ENCODE measurements at regions of chr5 and their contacts with region 1.

Region 1: DNA sequence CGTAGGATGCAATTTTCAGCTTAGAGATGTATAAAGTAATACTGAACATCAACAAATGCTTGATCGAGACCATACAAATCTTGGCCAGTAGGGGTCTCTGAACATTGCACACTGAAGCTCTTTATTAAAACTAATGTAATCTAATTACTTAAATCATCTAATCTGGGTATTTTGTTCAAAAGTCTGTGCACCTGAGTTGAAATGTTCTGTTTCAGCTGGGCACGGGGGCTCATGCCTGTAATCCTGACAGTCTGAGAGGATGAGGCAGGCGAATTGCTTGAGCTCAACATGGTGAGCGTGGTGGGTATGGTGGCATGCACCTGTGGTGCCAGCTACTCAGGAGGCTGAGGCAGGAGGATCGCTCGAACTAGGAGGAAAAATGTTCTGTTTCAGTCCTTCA is 41.0 kb downstream of the ESM1 start:
- DNase-seq: peak; percentile 59
- ATAC-seq: peak; percentile 67
- H3K4me3 Mint-ChIP-seq: no peak overlapping the region
- H3K27ac Mint-ChIP-seq: no peak overlapping the region
- H3K4me1 Mint-ChIP-seq: no peaks in the 10 kb centered on the region
- H3K27me3 Mint-ChIP-seq: peaks cover 1% of the 10 kb centered on the region
- CTCF ChIP-seq: peak; percentile 86

Region 2: DNA sequence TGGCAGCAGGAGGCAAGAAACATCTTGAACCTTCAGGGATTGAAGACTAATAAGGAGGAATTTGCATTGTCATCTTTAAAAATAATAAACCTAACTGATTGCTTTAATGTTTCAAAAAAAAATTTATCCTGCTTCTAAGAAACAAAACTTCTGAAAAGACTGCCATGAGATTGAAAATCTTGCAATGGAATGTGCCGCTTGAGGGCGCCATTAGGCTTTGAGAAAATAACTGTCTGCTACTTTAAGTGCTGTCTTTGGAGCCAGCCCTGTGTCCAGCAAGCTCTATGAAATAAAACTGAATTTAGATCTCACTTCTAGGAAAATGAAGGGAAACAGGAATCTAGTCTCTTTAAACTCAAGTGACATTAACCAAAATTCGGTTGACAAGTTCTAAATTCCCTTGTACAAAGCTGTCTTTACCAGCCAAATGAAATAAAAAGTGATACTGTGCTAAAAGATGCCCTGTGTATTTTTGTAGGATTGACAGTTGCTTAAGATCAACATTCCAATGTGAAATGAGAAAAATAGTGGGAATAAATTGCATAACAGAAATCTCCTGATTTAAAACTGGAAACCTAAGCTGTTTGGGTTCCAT is 38.3 kb before region 1 on chr5:
- CTCF ChIA-PET with region 1: interaction called, 67 read pairs
- POLR2A ChIA-PET with region 1: no interaction called
- intact Hi-C with region 1: no loop called
- DNase-seq: peak; percentile 90
- ATAC-seq: no peak
- H3K4me3 Mint-ChIP-seq: no peak overlapping the region
- H3K27ac Mint-ChIP-seq: no peak overlapping the region
- H3K4me1 Mint-ChIP-seq: peaks cover 17% of the 10 kb centered on the region
- H3K27me3 Mint-ChIP-seq: peaks cover 36% of the 10 kb centered on the region
- CTCF ChIP-seq: peak; percentile 88

Region 3: GRCh38 chr5:54969856-54970828 is 25.8 kb after region 1 on chr5:
- CTCF ChIA-PET with region 1: interaction called, 40 read pairs
- POLR2A ChIA-PET with region 1: interaction called, 4 read pairs
- intact Hi-C with region 1: no loop called
- DNase-seq: no peak
- ATAC-seq: no peak
- H3K4me3 Mint-ChIP-seq: no peak overlapping the region
- H3K27ac Mint-ChIP-seq: no peak overlapping the region
- H3K4me1 Mint-ChIP-seq: no peaks in the 10 kb centered on the region
- H3K27me3 Mint-ChIP-seq: no peaks in the 10 kb centered on the region
- CTCF ChIP-seq: no peak

Region 4: GRCh38 chr5:55037046-55037771 is 92.8 kb after region 1 on chr5:
- CTCF ChIA-PET with region 1: interaction called, 14 read pairs
- POLR2A ChIA-PET with region 1: no interaction called
- intact Hi-C with region 1: no loop called
- DNase-seq: peak; percentile 89
- ATAC-seq: peak; percentile 94
- H3K4me3 Mint-ChIP-seq: peak overlapping the region; percentile 13
- H3K27ac Mint-ChIP-seq: peak overlapping the region; percentile 84
- H3K4me1 Mint-ChIP-seq: peaks cover 37% of the 10 kb centered on the region
- H3K27me3 Mint-ChIP-seq: no peaks in the 10 kb centered on the region
- CTCF ChIP-seq: no peak

Region 5: GRCh38 chr5:55072666-55073065 is 128.3 kb after region 1 on chr5:
- CTCF ChIA-PET with region 1: interaction called, 13 read pairs
- POLR2A ChIA-PET with region 1: no interaction called
- intact Hi-C with region 1: no loop called
- DNase-seq: no peak
- ATAC-seq: peak; percentile 87
- H3K4me3 Mint-ChIP-seq: peak overlapping the region; percentile 42
- H3K27ac Mint-ChIP-seq: peak overlapping the region; percentile 85
- H3K4me1 Mint-ChIP-seq: peaks cover 37% of the 10 kb centered on the region
- H3K27me3 Mint-ChIP-seq: no peaks in the 10 kb centered on the region
- CTCF ChIP-seq: no peak

Region 6: DNA sequence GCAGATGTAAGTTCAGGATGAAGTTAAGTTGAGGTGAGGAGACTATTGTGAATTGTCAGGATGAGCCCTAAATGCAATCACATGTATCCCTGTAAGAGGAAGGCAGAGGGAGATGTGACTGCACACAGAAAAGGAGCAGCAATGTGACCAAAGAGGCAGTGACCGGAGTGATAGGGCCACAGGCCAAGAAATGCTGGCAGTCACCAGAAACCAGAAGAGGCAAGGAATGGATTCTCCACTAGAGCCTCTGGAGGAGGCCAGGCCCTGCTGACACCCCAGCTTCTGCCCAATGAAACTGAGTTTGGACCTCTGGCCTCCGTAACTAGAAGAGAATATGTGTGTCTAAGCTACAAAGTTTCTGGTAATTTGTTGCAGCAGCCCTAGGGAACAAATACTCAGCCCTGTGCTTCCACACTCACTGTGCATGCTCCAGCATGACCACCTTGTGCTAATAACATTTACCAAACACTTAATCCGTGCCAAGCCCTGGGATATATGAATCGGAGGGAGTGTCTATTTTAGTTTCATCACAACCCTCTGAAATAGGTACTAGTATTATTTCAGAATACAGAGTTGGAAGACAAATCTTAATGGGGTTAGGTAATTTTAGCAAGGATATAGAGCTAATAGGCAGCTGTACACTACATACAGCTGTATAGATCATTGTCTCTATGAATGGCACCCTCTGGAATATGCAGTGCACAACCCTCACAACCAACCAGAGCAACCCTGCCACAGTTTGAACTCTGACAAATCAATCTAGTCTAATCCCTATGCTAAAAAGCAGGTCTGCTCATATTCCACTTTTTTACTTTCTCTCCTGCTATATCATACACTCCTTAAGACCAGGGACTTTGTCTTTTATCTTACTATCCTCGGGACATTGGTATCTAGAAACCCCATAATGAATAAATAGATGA is 207.8 kb after region 1 on chr5:
- CTCF ChIA-PET with region 1: interaction called, 43 read pairs
- POLR2A ChIA-PET with region 1: no interaction called
- intact Hi-C with region 1: no loop called
- DNase-seq: no peak
- ATAC-seq: no peak
- H3K4me3 Mint-ChIP-seq: no peak overlapping the region
- H3K27ac Mint-ChIP-seq: no peak overlapping the region
- H3K4me1 Mint-ChIP-seq: no peaks in the 10 kb centered on the region
- H3K27me3 Mint-ChIP-seq: peaks cover 14% of the 10 kb centered on the region
- CTCF ChIP-seq: no peak